Psoas muscle (tissue), 8 donors: ENCODE measurements at regions of chr9 and their contacts with region 1.

Region 1: DNA sequence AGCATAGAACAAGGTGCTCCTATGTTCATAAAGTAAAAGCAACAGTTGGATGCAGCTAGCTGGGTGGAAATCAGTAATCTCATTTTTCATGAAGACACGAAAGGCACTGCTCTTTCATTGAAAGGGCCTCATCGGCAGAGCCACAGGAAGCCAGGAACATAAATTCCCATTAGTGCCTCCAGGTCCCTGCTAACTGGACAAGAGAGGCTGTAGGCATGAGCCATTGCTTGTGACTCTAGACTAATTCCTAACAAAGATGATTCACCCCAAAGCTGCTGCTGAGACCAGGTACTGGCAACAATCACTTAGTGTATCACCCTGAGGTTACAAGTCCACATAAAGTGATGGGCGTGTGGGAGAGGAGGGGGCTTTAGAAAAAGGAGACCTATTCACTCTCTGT is 141.8 kb downstream of the BRINP1 start:
- DNase-seq: no peak
- ATAC-seq: no peak
- H3K4me3 ChIP-seq: no peak overlapping the region
- H3K27ac ChIP-seq: no peak overlapping the region
- H3K4me1 ChIP-seq: no peaks in the 10 kb centered on the region
- H3K27me3 ChIP-seq: no peaks in the 10 kb centered on the region
- CTCF ChIP-seq: no peak

Region 2: DNA sequence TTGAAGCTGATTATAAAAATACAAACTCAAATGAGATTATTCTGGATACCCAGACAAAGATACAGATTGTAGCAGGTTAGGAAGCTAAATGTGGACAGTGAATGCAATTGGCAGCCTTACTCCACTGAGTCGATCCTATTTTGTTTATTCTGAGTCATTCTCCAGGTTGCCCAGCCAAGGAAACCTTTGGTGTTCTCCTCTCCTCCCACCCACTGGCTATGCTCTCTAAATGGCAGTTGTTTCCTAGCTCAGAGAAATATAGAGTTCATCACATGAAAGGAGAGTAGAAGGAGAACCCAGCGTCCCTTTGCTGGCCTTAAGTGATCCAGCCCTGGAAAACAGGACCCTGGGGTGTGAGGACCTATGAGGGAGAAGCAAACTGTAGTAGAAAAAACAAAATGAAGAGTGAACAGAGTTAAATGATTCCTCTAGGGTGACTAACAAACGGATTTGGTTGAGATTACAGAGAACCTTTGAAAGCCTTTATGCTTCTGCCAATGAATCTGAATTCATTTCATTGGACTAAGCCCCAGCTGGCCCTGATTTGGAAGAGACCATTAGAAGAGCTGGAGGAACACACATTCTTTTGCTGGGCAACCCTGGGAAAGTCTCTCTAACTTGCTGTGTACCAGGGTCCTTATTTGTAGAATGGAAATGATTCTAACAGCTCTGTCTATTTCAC is 46.7 kb after region 1 on chr9:
- intact Hi-C with region 1: loop called in 1 of 2 experiments (anchors 5 kb)
- DNase-seq: no peak
- ATAC-seq: peak; percentile 81 to 97 (median 90)
- H3K4me3 ChIP-seq: no peak overlapping the region
- H3K27ac ChIP-seq: peak overlapping the region; percentile 72
- H3K4me1 ChIP-seq: peaks cover 8% of the 10 kb centered on the region
- H3K27me3 ChIP-seq: no peaks in the 10 kb centered on the region
- CTCF ChIP-seq: no peak